ENCODE measurements at regions of chr16 and their contacts with region 1.

Region 1: GRCh38 chr16:85086347-85087291 is 25.7 kb downstream of the CIBAR2 start:
- DNase-seq: peak; percentile 63
- H3K4me3 ChIP-seq: no peak overlapping the region
- H3K27ac ChIP-seq: no peak overlapping the region
- H3K4me1 ChIP-seq: no peaks in the 10 kb centered on the region
- H3K27me3 ChIP-seq: peaks cover 3 to 7% of the 10 kb centered on the region in 2 experiments
- CTCF ChIP-seq: peak; percentile 77 to 81
- POLR2A ChIP-seq: no peak

Region 2: DNA sequence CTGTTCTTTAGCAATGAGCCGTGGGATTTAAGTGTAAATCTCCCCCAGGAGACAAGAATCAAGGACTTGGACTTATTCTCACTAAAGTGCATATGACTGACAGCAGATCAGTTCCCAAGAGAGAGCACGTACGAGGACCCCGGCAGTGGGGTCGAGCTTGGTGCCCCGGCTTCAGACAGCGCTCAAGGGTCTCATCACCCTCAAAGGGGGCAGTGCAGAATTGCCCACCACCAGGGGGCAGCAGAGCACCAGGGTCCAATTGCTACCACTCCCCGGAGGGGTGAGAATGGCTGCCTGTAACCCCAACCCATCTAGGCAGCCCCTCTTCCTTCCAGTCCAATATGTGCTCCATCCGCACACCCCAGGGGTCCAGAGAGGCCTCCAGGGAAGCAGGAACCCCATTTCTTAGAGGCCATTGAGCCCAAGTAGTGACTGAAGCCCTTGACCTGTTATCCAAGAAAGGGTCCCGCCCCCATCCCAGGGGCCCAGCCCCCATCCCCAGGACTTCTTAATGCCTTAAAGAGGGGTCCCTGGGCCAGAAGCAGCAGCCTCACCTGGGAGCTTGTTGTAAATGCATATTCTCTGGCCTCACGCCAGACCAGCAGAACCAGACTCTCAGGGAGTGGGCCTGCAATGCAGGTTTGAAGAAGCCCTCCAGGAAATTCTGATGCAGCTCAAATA is 161.4 kb before region 1 on chr16:
- CTCF ChIA-PET with region 1: interaction called, 24 read pairs
- POLR2A ChIA-PET with region 1: no interaction called
- dilution Hi-C with region 1: no loop called
- intact Hi-C with region 1: no loop called
- DNase-seq: peak; percentile 23
- H3K4me3 ChIP-seq: no peak overlapping the region
- H3K27ac ChIP-seq: no peak overlapping the region
- H3K4me1 ChIP-seq: no peaks in the 10 kb centered on the region
- H3K27me3 ChIP-seq: no peaks in the 10 kb centered on the region
- CTCF ChIP-seq: peak; percentile 65 to 87
- POLR2A ChIP-seq: no peak

Region 3: DNA sequence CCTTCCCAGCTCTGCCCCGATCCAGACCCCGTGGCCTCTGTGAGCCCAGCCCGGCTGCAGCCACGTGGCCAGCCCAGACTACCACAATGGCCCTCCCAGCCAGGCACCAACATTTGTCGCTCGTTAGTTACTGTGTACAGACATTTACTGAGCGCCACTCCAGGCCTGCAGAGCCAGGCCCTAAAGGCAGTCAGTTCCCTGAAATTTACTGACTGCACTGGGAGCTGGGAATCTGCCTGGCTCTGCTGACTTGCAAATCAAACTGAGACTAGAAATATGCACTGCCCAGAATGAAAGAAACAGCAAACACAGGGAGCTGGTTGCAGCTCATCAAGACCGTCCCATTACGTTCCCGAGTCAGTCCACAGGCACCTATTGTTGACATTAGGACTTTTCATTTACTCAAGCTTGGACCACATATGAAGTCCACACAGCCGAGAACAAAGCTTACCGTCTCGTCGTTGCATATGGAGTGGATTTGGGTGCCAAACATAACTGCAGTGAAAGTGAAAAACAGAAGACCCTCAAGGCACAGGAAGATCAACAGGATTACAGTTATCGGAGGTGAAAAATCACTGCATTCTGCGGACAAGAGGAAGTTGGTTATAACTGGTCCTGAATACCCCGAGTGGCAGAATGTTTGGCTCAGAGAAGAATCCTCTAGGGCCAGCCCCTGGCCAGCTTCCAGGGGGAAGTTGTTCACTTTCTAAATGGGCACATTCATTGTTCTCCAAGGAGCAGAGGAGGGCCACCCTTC is 109.8 kb before region 1 on chr16:
- CTCF ChIA-PET with region 1: interaction called, 53 read pairs
- POLR2A ChIA-PET with region 1: no interaction called
- dilution Hi-C with region 1: no loop called
- intact Hi-C with region 1: no loop called
- DNase-seq: peak; percentile 74
- H3K4me3 ChIP-seq: no peak overlapping the region
- H3K27ac ChIP-seq: no peak overlapping the region
- H3K4me1 ChIP-seq: peaks cover 16% of the 10 kb centered on the region
- H3K27me3 ChIP-seq: no peaks in the 10 kb centered on the region
- CTCF ChIP-seq: no peak
- POLR2A ChIP-seq: no peak

Region 4: GRCh38 chr16:85010931-85011845 is 75.4 kb before region 1 on chr16 and contains the start of gene ZDHHC7:
- CTCF ChIA-PET with region 1: interaction called, 38 read pairs
- POLR2A ChIA-PET with region 1: no interaction called
- dilution Hi-C with region 1: no loop called
- intact Hi-C with region 1: no loop called
- DNase-seq: peak; percentile 88
- H3K4me3 ChIP-seq: peak within 1 kb of the TSS; percentile 59 to 91 (median 74)
- H3K27ac ChIP-seq: peak within 1 kb of the TSS; percentile 97
- H3K4me1 ChIP-seq: peaks cover 9% of the 10 kb centered on the region
- H3K27me3 ChIP-seq: no peaks in the 10 kb centered on the region
- CTCF ChIP-seq: no peak
- POLR2A ChIP-seq: peak; percentile 88
- total RNA-seq, gene ZDHHC7: 40.4 and 44.1 TPM in 2 replicates

Region 5: GRCh38 chr16:85046931-85047866 is 39.4 kb before region 1 on chr16:
- CTCF ChIA-PET with region 1: interaction called, 11 read pairs
- POLR2A ChIA-PET with region 1: no interaction called
- dilution Hi-C with region 1: no loop called
- intact Hi-C with region 1: no loop called
- DNase-seq: no peak
- H3K4me3 ChIP-seq: no peak overlapping the region
- H3K27ac ChIP-seq: no peak overlapping the region
- H3K4me1 ChIP-seq: no peaks in the 10 kb centered on the region
- H3K27me3 ChIP-seq: no peaks in the 10 kb centered on the region
- CTCF ChIP-seq: no peak
- POLR2A ChIP-seq: no peak

Region 6: DNA sequence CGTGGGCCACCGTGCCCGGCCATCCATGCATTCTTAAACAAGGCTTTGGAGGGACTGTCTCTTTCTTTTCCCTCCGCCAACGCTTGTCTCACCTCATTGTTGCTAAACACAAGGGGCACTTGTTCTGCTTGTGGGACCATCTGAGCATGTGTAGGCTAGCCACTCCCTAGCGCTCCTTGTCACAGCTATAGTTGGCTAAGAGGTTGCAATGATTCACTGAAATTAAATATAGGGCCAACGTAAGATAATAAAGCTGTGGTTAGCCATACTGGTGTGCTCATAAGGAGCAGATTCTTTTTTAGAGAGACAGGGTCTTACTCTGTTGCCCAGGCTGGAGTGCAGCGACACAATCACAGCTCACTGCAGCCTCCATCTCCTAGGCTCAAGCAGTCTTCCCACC is 17.9 kb before region 1 on chr16:
- CTCF ChIA-PET with region 1: interaction called, 13 read pairs
- POLR2A ChIA-PET with region 1: no interaction called
- dilution Hi-C with region 1: no loop called
- intact Hi-C with region 1: no loop called
- DNase-seq: no peak
- H3K4me3 ChIP-seq: no peak overlapping the region
- H3K27ac ChIP-seq: no peak overlapping the region
- H3K4me1 ChIP-seq: peaks cover under 1% of the 10 kb centered on the region
- H3K27me3 ChIP-seq: no peaks in the 10 kb centered on the region
- CTCF ChIP-seq: no peak
- POLR2A ChIP-seq: no peak